HepG2 (cell line): ENCODE measurements at regions of chr4 and their contacts with region 1.

Region 1: GRCh38 chr4:2977211-2978088 is 14.1 kb downstream of the GRK4 start:
- DNase-seq: peak; percentile 23
- ATAC-seq: peak; percentile 60
- H3K4me3 ChIP-seq: peak overlapping the region in 2 of 3 experiments; percentile 19 to 35; a peak in 2 of 6 replicates
- H3K27ac ChIP-seq: no peak overlapping the region
- H3K4me1 ChIP-seq: peaks cover 20% of the 10 kb centered on the region
- H3K27me3 ChIP-seq: peaks cover 0 to 29% of the 10 kb centered on the region in 2 experiments; a peak in 3 of 5 replicates
- CTCF ChIP-seq: no peak
- EP300 ChIP-seq: no peak
- POLR2A ChIP-seq: no peak
- RAD21 ChIP-seq: no peak

Region 2: DNA sequence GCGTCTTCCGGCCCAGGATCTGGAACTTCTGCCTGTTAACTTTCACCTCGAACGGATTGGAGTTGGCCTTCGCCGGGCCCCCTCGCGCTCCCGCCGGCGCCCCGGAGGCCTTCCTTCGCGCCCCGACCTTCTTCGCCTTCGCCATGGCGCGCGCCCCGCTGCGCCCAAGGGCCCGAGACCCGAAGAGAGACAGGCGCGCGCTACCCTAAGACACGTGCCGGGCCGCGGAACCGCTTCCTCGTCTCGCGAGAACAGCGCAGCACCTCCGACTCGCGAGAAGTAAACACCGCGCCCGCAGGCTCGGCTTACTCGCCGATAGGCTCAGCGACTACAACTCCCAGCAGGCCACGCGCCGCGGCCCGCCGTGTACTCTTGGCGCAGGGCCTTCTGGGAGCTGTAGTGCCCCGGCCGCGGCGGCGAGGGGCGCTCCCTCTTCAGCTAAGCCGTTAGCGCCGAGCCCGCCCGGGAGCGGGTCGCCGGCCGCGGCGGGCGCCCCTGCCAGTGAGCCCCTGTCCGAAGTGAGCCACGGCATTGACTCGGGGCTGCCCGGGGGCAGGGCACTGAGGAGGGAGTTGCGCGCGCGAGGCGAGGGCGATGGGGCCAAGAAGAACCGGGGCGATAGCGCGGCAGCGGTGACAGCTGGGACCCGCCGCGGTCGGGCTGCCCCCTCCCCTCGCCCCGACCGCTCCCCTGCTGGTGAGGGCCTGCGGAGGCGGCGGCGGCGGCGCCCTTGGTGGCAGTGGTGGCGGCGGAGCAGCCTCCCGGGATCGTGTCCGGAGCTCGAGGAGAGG is 14.1 kb before region 1 on chr4 and contains the starts of genes GRK4 and NOP14:
- CTCF ChIA-PET with region 1: no interaction called
- POLR2A ChIA-PET with region 1: interaction called, 16 read pairs
- in situ Hi-C with region 1: no loop called
- intact Hi-C with region 1: no loop called
- DNase-seq: peak; percentile 94
- ATAC-seq: peak; percentile 92
- H3K4me3 ChIP-seq: peak within 1 kb of the TSS; percentile 84 to 90 (median 88)
- H3K27ac ChIP-seq: peak within 1 kb of the TSS; percentile 82
- H3K4me1 ChIP-seq: peaks cover 37% of the 10 kb centered on the region
- H3K27me3 ChIP-seq: no peaks in the 10 kb centered on the region; a peak in 1 of 5 replicates
- CTCF ChIP-seq: peak; percentile 60
- EP300 ChIP-seq: peak in 1 of 2 experiments; percentile 27; a peak in 2 of 4 replicates
- POLR2A ChIP-seq: peak in 1 of 2 experiments; percentile 65; a peak in 2 of 4 replicates
- RAD21 ChIP-seq: no peak; the same call in 1 of the 2 replicates
- total RNA-seq, gene GRK4: 2.0 and 2.5 TPM in 2 replicates
- total RNA-seq, gene NOP14: 47.9 and 63.4 TPM in 2 replicates

Region 3: GRCh38 chr4:3037957-3038461 is 60.6 kb after region 1 on chr4:
- CTCF ChIA-PET with region 1: interaction called, 14 read pairs
- POLR2A ChIA-PET with region 1: no interaction called
- in situ Hi-C with region 1: loop called (anchors 5 kb)
- intact Hi-C with region 1: loop called (anchors 1 kb)
- DNase-seq: no peak
- ATAC-seq: no peak
- H3K4me3 ChIP-seq: peak overlapping the region in 2 of 3 experiments; percentile 49 to 54; a peak in 4 of 6 replicates
- H3K27ac ChIP-seq: no peak overlapping the region
- H3K4me1 ChIP-seq: peaks cover 74% of the 10 kb centered on the region
- H3K27me3 ChIP-seq: peaks cover 3 to 31% of the 10 kb centered on the region in 2 experiments; a peak in 3 of 5 replicates
- CTCF ChIP-seq: no peak
- EP300 ChIP-seq: no peak
- POLR2A ChIP-seq: no peak
- RAD21 ChIP-seq: no peak

Region 4: GRCh38 chr4:3484986-3485791 is 507.7 kb after region 1 on chr4:
- CTCF ChIA-PET with region 1: no interaction called
- POLR2A ChIA-PET with region 1: no interaction called
- in situ Hi-C with region 1: no loop called
- intact Hi-C with region 1: no loop called
- DNase-seq: no peak
- ATAC-seq: no peak
- H3K4me3 ChIP-seq: no peak overlapping the region
- H3K27ac ChIP-seq: no peak overlapping the region
- H3K4me1 ChIP-seq: peaks cover 15% of the 10 kb centered on the region
- H3K27me3 ChIP-seq: peaks cover 30 to 90% of the 10 kb centered on the region in 2 experiments
- CTCF ChIP-seq: no peak
- EP300 ChIP-seq: no peak
- POLR2A ChIP-seq: no peak
- RAD21 ChIP-seq: no peak